GM12878 (cell line): ENCODE measurements at regions of chr14 and their contacts with region 1.

Region 1: DNA sequence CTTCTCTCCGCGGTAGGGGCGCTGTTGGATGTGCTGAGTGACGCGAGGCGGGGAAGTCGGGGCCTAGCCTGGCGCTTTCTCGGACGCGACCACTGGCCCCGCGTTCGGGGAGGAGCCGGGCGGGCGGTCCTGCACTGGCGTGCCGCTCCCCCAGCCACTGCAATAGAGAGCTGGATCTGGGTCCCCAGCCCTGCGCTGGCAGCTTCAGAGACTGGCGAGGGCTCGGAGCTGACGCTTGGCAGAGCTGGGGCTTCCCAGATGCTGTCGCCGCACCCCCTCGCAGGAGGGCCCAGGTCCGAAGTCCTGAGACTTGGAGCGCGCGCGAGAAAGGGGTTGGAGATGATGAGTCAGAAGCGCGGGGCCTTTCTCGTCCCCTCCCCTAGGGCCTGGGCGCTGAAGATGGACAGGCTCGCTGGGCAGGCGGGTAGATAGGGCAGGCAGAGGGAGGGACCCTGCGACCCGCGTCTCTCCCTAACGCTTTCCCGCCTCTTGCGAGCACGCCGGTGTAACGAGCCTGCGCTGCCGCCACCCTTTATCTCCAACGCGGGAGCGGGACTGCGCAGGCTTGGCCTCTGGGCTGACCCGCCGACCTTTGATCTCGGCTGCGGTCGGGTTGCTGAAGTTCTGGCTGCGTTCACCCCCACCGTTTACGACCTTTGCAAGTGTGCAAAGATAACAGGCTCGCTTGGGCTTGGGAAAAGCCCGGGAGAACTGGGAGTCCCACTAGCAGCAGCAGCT is 3.0 kb downstream of the TMEM253 start:
- DNase-seq: peak; percentile 76
- ATAC-seq: peak; percentile 93
- H3K4me3 ChIP-seq: peak overlapping the region; percentile 76
- H3K27ac ChIP-seq: peak overlapping the region; percentile 92
- H3K4me1 ChIP-seq: peaks cover 22% of the 10 kb centered on the region
- H3K27me3 ChIP-seq: no peaks in the 10 kb centered on the region; a peak in 1 of 4 replicates
- CTCF ChIP-seq: peak; percentile 83 to 84 (median 83)
- EP300 ChIP-seq: peak in 1 of 2 experiments; percentile 35; a peak in 1 of 4 replicates
- POLR2A ChIP-seq: peak; percentile 98
- RAD21 ChIP-seq: 0 out of 2 replicates have a peak, but pooled peaks have one; percentile 21

Region 2: DNA sequence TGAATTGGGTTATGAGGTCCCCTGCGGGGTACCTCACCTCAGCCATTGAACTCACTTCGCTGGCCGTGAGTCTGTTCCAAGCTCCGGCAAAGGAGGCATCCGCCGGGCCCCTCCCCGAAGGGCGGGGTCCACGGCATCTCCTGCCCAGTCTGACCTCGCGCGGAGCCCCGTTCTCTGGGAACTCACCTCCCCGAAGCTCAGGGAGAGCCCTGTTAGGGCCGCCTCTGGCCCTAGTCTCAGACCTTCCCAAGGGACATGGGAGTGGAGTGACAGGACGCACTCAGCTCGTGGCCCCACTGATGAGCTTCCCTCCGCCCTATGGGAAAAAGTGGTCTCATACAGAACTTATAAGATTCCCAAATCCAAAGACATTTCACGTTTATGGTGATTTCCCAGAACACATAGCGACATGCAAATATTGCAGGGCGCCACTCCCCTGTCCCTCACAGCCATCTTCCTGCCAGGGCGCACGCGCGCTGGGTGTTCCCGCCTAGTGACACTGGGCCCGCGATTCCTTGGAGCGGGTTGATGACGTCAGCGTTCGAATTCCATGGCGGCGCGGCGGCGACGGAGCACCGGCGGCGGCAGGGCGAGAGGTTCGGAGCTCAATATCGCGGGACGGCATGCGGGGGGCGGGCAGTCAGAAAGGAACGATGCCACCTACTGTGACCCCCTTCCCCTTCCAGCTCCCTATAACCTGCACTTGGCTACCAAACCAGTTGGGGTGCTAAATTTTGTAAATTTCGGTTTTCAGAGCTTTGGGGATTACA is 760.6 kb before region 1 on chr14 and contains the start of gene PARP2:
- CTCF ChIA-PET with region 1: no interaction called
- POLR2A ChIA-PET with region 1: no interaction called
- RAD21 ChIA-PET with region 1: no interaction called
- SMC1A ChIA-PET with region 1: no interaction called
- in situ Hi-C with region 1: no loop called
- intact Hi-C with region 1: loop called (anchors 5 kb)
- DNase-seq: peak; percentile 99
- ATAC-seq: peak; percentile 96
- H3K4me3 ChIP-seq: peak within 1 kb of the TSS; percentile 81
- H3K27ac ChIP-seq: peak within 1 kb of the TSS; percentile 89
- H3K4me1 ChIP-seq: no peaks in the 10 kb centered on the region
- H3K27me3 ChIP-seq: no peaks in the 10 kb centered on the region
- CTCF ChIP-seq: no peak
- EP300 ChIP-seq: no peak
- POLR2A ChIP-seq: peak; percentile 97
- RAD21 ChIP-seq: no peak
- polyA plus RNA-seq, gene PARP2: 30.4 to 38.0 TPM

Region 3: GRCh38 chr14:21014761-21015190 is 89.1 kb before region 1 on chr14:
- CTCF ChIA-PET with region 1: interaction called, 253 read pairs
- POLR2A ChIA-PET with region 1: interaction called, 4 read pairs
- RAD21 ChIA-PET with region 1: interaction called, 70 read pairs
- SMC1A ChIA-PET with region 1: interaction called, 99 read pairs
- in situ Hi-C with region 1: loop called (anchors 5 kb)
- intact Hi-C with region 1: loop called (anchors 1 kb)
- DNase-seq: peak; percentile 25
- ATAC-seq: peak; percentile 91
- H3K4me3 ChIP-seq: no peak overlapping the region
- H3K27ac ChIP-seq: no peak overlapping the region
- H3K4me1 ChIP-seq: no peaks in the 10 kb centered on the region
- H3K27me3 ChIP-seq: peaks cover 0 to 5% of the 10 kb centered on the region in 2 experiments; a peak in 2 of 4 replicates
- CTCF ChIP-seq: peak; percentile 79 to 93 (median 88); a peak in 5 of 6 replicates
- EP300 ChIP-seq: no peak
- POLR2A ChIP-seq: no peak
- RAD21 ChIP-seq: peak; percentile 94

Region 4: GRCh38 chr14:21039585-21040369 is 64.1 kb before region 1 on chr14:
- CTCF ChIA-PET with region 1: interaction called, 11 read pairs
- POLR2A ChIA-PET with region 1: no interaction called
- RAD21 ChIA-PET with region 1: interaction called, 4 read pairs
- SMC1A ChIA-PET with region 1: interaction called, 3 read pairs
- in situ Hi-C with region 1: no loop called
- intact Hi-C with region 1: no loop called
- DNase-seq: no peak
- ATAC-seq: peak; percentile 87
- H3K4me3 ChIP-seq: no peak overlapping the region
- H3K27ac ChIP-seq: no peak overlapping the region
- H3K4me1 ChIP-seq: peaks cover 8% of the 10 kb centered on the region
- H3K27me3 ChIP-seq: peaks cover 0 to 7% of the 10 kb centered on the region in 2 experiments; a peak in 2 of 4 replicates
- CTCF ChIP-seq: peak; percentile 53 to 60 (median 60)
- EP300 ChIP-seq: no peak
- POLR2A ChIP-seq: no peak
- RAD21 ChIP-seq: peak; percentile 64

Region 5: DNA sequence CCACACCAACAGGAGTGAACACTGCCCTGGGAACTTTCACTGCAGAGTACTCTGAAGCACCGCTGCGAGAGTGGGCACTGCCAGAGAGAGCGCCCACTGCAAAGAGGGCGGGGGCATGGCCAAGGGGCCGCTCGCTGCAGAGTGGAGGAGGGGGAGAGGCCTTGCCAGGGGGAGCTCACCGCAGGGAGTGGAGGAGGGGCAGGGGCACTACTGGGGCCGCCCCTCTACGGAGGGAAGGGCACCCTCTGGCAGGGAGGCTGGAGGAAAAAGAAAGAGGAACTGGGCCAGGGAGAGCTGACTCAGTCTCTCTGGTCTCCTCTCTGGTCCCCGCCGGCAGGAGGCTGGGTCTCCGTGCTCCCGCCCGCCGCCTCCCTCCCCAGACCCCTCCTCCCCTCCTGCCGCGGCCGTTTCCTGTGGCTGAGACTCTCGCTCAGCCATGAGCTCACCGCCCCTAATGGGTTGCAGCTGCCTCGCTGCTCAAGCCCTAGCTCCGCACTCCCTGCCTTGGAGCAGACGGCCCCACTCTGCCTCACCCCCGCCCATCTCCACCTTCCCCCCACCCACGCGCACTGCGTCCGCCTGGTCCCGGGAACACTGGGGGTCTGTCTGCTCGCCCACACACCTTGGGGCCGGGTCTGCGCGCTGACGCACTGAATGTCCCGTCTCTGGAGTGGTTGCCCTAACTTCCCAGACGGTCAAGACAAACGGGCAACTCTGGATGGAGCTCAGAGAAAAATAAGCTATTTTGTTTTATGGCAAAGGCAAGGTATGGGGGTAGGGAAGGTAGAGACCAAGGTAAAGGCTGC is 32.5 kb before region 1 on chr14:
- CTCF ChIA-PET with region 1: interaction called, 151 read pairs
- POLR2A ChIA-PET with region 1: interaction called, 21 read pairs
- RAD21 ChIA-PET with region 1: interaction called, 55 read pairs
- SMC1A ChIA-PET with region 1: interaction called, 38 read pairs
- in situ Hi-C with region 1: no loop called
- intact Hi-C with region 1: loop called (anchors 1 kb)
- DNase-seq: peak; percentile 51
- ATAC-seq: peak; percentile 82
- H3K4me3 ChIP-seq: peak overlapping the region; percentile 67
- H3K27ac ChIP-seq: no peak overlapping the region
- H3K4me1 ChIP-seq: peaks cover 29% of the 10 kb centered on the region
- H3K27me3 ChIP-seq: peaks cover 9 to 20% of the 10 kb centered on the region in 2 experiments
- CTCF ChIP-seq: no peak
- EP300 ChIP-seq: no peak
- POLR2A ChIP-seq: no peak
- RAD21 ChIP-seq: no peak

Region 6: DNA sequence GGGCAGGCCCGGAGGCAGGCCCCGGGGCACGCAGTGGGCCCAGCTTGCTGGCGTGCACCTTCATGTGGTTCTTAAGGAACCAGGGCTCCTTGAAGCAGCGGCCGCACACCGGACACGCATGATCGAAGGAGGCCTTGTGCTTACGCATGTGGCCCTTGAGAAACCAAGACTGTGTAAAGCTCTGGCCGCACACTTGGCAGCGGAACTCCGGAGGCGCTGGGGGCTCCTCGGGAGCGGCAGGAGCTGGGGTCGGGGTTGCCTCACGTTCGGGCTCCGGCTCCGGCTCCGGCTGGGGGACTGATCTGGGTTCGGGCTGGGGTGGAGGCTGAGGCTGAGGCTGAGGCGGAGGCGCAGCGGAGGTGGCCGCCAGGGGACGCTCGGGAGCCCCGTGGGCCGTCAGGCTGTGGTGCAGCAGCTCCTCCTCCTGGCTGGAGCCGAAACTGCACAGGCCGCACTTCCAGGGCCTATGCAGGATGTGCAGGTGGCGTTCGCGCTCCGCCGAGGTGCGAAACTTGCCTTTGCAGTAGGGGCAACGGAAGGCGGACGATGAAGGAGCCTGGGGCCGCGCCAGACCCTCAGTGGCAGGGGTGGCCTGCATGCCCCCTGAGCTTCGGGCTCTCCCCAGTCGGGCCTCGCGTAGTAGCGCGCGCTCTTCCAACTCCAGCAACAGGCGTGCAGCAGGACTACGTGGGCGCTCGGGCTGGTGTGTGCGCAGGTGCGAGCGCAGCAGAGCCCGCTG is 11.4 kb before region 1 on chr14:
- CTCF ChIA-PET with region 1: interaction called, 194 read pairs
- POLR2A ChIA-PET with region 1: interaction called, 5 read pairs
- RAD21 ChIA-PET with region 1: interaction called, 51 read pairs
- SMC1A ChIA-PET with region 1: interaction called, 78 read pairs
- in situ Hi-C with region 1: no loop called
- intact Hi-C with region 1: loop called (anchors 1 kb)
- DNase-seq: no peak
- ATAC-seq: peak; percentile 92
- H3K4me3 ChIP-seq: no peak overlapping the region
- H3K27ac ChIP-seq: no peak overlapping the region
- H3K4me1 ChIP-seq: no peaks in the 10 kb centered on the region
- H3K27me3 ChIP-seq: peaks cover 0 to 3% of the 10 kb centered on the region in 2 experiments; a peak in 2 of 4 replicates
- CTCF ChIP-seq: peak; percentile 100; a peak in 5 of 6 replicates
- EP300 ChIP-seq: no peak
- POLR2A ChIP-seq: no peak
- RAD21 ChIP-seq: peak; percentile 91

Region 7: DNA sequence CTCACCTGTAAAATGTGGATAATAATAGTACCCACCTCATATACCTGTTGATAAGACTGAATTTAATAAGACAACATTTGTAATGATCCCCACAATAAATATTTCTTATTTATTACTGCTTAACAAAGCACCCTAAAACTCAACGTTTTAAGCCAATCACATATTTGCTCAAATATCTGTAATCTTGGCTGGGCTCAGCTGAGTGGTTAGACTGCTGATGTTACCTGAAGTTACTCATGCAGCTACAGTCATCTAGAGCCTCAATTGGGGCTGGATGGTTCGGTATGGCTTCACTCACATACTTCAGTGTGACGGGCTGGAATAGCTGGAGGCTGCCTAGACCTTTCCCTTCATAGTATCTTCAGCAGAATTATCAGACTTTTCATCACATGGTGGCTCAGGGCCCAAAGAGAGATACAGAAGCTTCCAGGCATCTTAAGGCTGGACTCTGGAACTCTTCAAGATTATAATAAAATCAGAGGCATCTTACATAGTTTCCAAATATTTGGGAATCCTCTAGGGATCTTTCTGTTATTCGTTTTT is 56.3 kb after region 1 on chr14:
- CTCF ChIA-PET with region 1: no interaction called
- POLR2A ChIA-PET with region 1: no interaction called
- RAD21 ChIA-PET with region 1: no interaction called
- SMC1A ChIA-PET with region 1: no interaction called
- in situ Hi-C with region 1: no loop called
- intact Hi-C with region 1: no loop called
- DNase-seq: no peak
- ATAC-seq: no peak
- H3K4me3 ChIP-seq: no peak overlapping the region
- H3K27ac ChIP-seq: no peak overlapping the region
- H3K4me1 ChIP-seq: no peaks in the 10 kb centered on the region
- H3K27me3 ChIP-seq: no peaks in the 10 kb centered on the region
- CTCF ChIP-seq: no peak
- EP300 ChIP-seq: no peak
- POLR2A ChIP-seq: no peak
- RAD21 ChIP-seq: no peak